ENCODE measurements at regions of chr9 and their contacts with region 1.

Region 1: GRCh38 chr9:128656416-128657343 is at the start of gene DYNC2I2:
- DNase-seq: peak; percentile 94 to 99 (median 96)
- ATAC-seq: peak; percentile 98
- H3K4me3 ChIP-seq: peak within 1 kb of the TSS; percentile 64
- H3K4me3 Mint-ChIP-seq: peak within 1 kb of the TSS; percentile 96
- H3K27ac ChIP-seq: peak within 1 kb of the TSS; percentile 94 to 96
- H3K27ac Mint-ChIP-seq: peak within 1 kb of the TSS; percentile 95
- H3K4me1 ChIP-seq: peaks cover 13% of the 10 kb centered on the region
- H3K4me1 Mint-ChIP-seq: peaks cover 8% of the 10 kb centered on the region
- H3K27me3 ChIP-seq: no peaks in the 10 kb centered on the region
- H3K27me3 Mint-ChIP-seq: no peaks in the 10 kb centered on the region
- CTCF ChIP-seq: no peak
- total RNA-seq, gene DYNC2I2: 2.2 to 3.2 TPM

Region 2: GRCh38 chr9:128669786-128670185 is 13.1 kb after region 1 on chr9:
- CTCF ChIA-PET with region 1: no interaction called
- POLR2A ChIA-PET with region 1: no interaction called
- intact Hi-C with region 1: no loop called
- DNase-seq: no peak
- ATAC-seq: no peak
- H3K4me3 ChIP-seq: no peak overlapping the region
- H3K4me3 Mint-ChIP-seq: no peak overlapping the region
- H3K27ac ChIP-seq: no peak overlapping the region
- H3K27ac Mint-ChIP-seq: no peak overlapping the region
- H3K4me1 ChIP-seq: no peaks in the 10 kb centered on the region
- H3K4me1 Mint-ChIP-seq: no peaks in the 10 kb centered on the region
- H3K27me3 ChIP-seq: no peaks in the 10 kb centered on the region
- H3K27me3 Mint-ChIP-seq: no peaks in the 10 kb centered on the region
- CTCF ChIP-seq: no peak

Region 3: DNA sequence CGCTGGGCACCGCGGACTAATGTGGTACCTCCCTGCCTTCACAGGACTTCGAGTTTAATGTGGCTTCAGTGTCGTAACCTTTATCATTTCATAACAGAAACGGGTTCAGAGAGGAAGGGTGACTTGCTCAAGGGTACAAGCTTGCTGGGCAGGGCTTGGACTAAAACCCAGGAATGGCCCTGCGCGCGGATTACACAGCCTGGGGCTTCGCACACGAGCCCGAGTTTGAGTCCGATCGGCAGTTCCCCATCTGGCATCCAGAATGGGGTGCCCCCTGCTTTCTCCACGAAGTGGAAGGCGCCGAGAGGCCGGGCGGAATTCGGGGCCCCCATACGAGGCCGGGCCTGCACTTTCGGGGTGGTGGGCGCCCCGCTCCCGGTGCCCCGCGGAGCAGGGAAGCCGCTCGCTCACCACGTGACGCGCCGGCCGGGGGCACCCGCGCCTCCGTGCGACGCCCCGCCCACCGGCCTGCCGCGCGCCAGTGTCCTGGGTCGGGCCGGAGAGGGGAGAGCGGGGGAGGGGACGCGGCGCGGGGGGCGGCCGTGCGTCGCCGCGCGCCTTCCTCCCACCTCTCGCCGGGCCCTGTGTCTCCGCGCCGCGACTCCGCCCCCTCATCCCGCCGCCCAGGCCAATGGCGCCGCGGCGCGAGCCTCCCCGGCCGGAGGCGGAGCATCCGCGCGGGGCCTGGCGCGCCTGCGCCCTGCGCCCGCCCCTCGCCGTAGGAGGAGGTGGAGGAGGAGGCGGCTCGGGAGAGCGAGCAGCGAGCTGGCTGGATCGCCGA is 32.0 kb after region 1 on chr9 and contains the start of gene SET:
- CTCF ChIA-PET with region 1: no interaction called
- POLR2A ChIA-PET with region 1: interaction called, 15 read pairs
- intact Hi-C with region 1: loop called (anchors 1 kb)
- DNase-seq: peak; percentile 82 to 97 (median 92)
- ATAC-seq: peak; percentile 78
- H3K4me3 ChIP-seq: peak within 1 kb of the TSS; percentile 89
- H3K4me3 Mint-ChIP-seq: peak within 1 kb of the TSS; percentile 95
- H3K27ac ChIP-seq: peak within 1 kb of the TSS; percentile 84
- H3K27ac Mint-ChIP-seq: peak within 1 kb of the TSS; percentile 94
- H3K4me1 ChIP-seq: peaks cover 58% of the 10 kb centered on the region
- H3K4me1 Mint-ChIP-seq: peaks cover 59% of the 10 kb centered on the region
- H3K27me3 ChIP-seq: no peaks in the 10 kb centered on the region
- H3K27me3 Mint-ChIP-seq: no peaks in the 10 kb centered on the region
- CTCF ChIP-seq: no peak
- total RNA-seq, gene SET: 228 to 241 TPM

Region 4: GRCh38 chr9:128702445-128702948 is 45.8 kb after region 1 on chr9 and contains the start of gene PKN3:
- CTCF ChIA-PET with region 1: interaction called, 3 read pairs
- POLR2A ChIA-PET with region 1: no interaction called
- intact Hi-C with region 1: loop called in 1 of 2 experiments (anchors 5 kb)
- DNase-seq: peak; percentile 73 to 91 (median 83)
- ATAC-seq: peak; percentile 84
- H3K4me3 ChIP-seq: peak within 1 kb of the TSS; percentile 56
- H3K4me3 Mint-ChIP-seq: peak within 1 kb of the TSS; percentile 91
- H3K27ac ChIP-seq: no peak within 1 kb of the TSS
- H3K27ac Mint-ChIP-seq: peak within 1 kb of the TSS; percentile 24
- H3K4me1 ChIP-seq: peaks cover 20% of the 10 kb centered on the region
- H3K4me1 Mint-ChIP-seq: peaks cover 11% of the 10 kb centered on the region
- H3K27me3 ChIP-seq: no peaks in the 10 kb centered on the region
- H3K27me3 Mint-ChIP-seq: no peaks in the 10 kb centered on the region
- CTCF ChIP-seq: peak; percentile 92
- total RNA-seq, gene PKN3: 0.95 to 1.9 TPM

Region 5: DNA sequence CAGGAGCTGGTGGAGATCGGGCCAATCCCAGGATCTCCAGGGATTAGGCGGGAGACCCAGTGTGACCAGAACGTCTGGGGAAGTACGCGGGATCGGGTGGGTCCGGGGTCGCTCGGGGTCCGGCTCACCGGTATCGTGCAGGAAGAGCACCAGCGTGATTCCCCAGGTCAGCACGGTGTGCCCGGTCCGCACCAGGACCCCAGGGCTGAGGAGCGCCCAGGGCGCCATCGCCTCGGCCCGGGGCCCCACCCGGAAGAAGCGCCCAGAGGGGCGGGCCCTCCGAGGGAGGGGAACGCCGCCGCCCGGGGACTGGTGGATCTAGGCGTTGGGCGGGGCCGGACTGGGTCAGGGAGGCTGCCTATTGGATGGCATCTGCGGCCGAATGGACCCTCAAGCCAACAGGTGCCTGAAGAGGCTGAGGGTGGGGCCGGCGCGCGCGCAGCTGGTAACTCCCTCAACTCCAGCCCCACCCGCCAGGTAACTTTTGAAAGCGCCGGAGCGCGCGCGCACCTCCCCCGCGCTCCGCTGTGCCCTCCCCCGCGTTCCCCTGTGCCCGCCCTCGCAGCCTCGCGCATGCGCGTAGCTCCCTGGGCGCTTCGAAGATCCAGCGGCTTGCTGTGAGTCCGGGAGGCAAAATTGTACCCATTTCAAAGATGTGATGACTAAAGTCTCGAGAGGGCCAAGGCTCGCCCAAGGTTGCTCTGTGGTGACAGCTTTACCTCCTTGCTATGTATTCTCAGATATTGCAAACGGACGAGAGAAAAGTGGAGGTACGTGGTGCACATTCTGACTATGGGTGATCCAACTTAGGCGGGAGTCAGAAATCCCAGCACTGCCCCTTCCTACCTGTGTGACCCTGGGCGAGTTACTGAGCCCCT is 67.4 kb after region 1 on chr9 and contains the start of gene ZDHHC12:
- CTCF ChIA-PET with region 1: no interaction called
- POLR2A ChIA-PET with region 1: interaction called, 3 read pairs
- intact Hi-C with region 1: loop called in 1 of 2 experiments (anchors 2 kb)
- DNase-seq: peak; percentile 97 to 100 (median 99)
- ATAC-seq: peak; percentile 96
- H3K4me3 ChIP-seq: peak within 1 kb of the TSS; percentile 90
- H3K4me3 Mint-ChIP-seq: peak within 1 kb of the TSS; percentile 95
- H3K27ac ChIP-seq: peak within 1 kb of the TSS; percentile 70 to 72
- H3K27ac Mint-ChIP-seq: peak within 1 kb of the TSS; percentile 86
- H3K4me1 ChIP-seq: peaks cover 53% of the 10 kb centered on the region
- H3K4me1 Mint-ChIP-seq: peaks cover 33% of the 10 kb centered on the region
- H3K27me3 ChIP-seq: no peaks in the 10 kb centered on the region
- H3K27me3 Mint-ChIP-seq: no peaks in the 10 kb centered on the region
- CTCF ChIP-seq: no peak
- total RNA-seq, gene ZDHHC12: 22.0 to 23.7 TPM

Measured in CD4-positive, alpha-beta T cell (primary cell).